ENCODE measurements at regions of chr12 and their contacts with region 1.

Region 1: DNA sequence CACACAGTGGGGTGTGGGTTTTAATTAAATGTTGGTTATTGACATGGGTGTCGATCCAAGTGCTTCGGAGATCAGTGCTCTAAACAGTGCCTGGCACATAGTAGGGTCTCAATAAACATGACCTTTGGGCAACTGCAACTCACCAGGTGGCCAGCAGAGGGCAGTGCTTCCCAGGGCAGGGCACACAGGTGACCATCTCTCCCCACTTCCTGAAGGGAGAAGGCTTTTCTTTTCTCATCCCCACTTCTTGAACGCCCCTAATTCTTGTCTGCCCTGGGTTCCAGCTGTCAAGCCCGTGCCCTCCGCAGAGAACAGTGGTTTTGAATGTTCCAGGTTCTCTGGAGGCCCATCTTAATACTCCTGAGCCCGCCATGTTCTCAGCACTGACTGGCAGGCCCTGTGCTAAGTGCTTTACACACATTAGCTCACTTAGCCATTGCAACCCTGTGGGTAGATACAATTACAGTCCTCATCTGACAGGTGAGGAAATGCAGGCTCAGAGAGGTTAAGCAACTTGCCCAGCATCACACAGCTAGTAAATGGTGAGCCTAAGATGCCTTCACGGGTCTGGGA is 16.3 kb downstream of the RAPGEF3 start:
- DNase-seq: peak; percentile 87
- H3K4me3 Mint-ChIP-seq: no peak overlapping the region
- H3K27ac Mint-ChIP-seq: no peak overlapping the region
- H3K4me1 Mint-ChIP-seq: peaks cover 19% of the 10 kb centered on the region
- H3K27me3 Mint-ChIP-seq: peaks cover 2% of the 10 kb centered on the region

Region 2: DNA sequence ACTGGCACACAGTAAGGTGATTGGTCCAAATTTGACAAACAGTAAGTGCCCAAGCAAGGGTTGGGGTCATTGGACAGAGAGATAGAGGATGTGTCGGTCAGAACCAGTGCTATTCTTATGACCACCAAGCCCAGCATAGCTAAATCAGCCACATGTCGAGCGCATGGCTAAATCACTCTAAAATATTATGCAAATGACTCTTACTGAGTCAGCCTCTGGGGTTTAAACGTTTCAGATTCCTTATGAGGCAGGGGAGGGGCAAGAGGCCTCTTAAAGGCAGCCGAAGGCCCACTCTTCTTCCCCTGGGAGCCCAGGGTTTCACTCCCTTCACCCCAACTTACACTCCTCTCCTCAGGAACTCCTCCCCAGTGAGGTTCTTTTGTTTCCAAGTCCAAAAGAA is 16.4 kb before region 1 on chr12:
- CTCF ChIA-PET with region 1: interaction called, 85 read pairs
- intact Hi-C with region 1: no loop called
- DNase-seq: no peak
- H3K4me3 Mint-ChIP-seq: no peak overlapping the region
- H3K27ac Mint-ChIP-seq: no peak overlapping the region
- H3K4me1 Mint-ChIP-seq: peaks cover 19% of the 10 kb centered on the region
- H3K27me3 Mint-ChIP-seq: no peaks in the 10 kb centered on the region

Region 3: GRCh38 chr12:47767216-47767724 is 24.9 kb after region 1 on chr12:
- CTCF ChIA-PET with region 1: interaction called, 728 read pairs
- intact Hi-C with region 1: loop called (anchors 1 kb)
- DNase-seq: peak; percentile 89
- H3K4me3 Mint-ChIP-seq: no peak overlapping the region
- H3K27ac Mint-ChIP-seq: no peak overlapping the region
- H3K4me1 Mint-ChIP-seq: no peaks in the 10 kb centered on the region
- H3K27me3 Mint-ChIP-seq: no peaks in the 10 kb centered on the region

Region 4: DNA sequence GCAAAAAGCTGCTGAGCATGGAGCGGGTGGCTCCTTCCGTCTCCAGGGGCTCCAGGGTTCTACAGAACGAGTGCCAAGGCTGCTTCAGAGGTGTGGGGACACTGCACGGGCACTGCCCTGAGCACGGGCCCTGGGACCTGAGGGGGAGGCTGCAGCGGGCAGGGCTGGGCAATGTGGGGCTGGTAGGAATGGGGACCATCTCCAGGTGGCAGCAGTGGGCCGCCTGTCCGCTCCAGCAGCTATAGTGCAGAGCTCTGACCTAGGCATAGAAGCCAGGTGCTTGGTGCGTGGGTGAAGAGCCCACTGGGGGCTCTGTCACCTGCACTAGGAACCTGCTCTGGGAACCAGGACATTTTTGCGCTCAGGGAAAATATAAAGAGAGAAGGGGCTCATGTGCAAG is 55.1 kb after region 1 on chr12:
- CTCF ChIA-PET with region 1: interaction called, 23 read pairs
- intact Hi-C with region 1: no loop called
- DNase-seq: peak; percentile 55
- H3K4me3 Mint-ChIP-seq: no peak overlapping the region
- H3K27ac Mint-ChIP-seq: peak overlapping the region; percentile 87
- H3K4me1 Mint-ChIP-seq: peaks cover 38% of the 10 kb centered on the region
- H3K27me3 Mint-ChIP-seq: no peaks in the 10 kb centered on the region

Region 5: GRCh38 chr12:47828608-47829536 is 86.5 kb after region 1 on chr12:
- CTCF ChIA-PET with region 1: interaction called, 440 read pairs
- intact Hi-C with region 1: no loop called
- DNase-seq: peak; percentile 63
- H3K4me3 Mint-ChIP-seq: peak overlapping the region; percentile 63
- H3K27ac Mint-ChIP-seq: peak overlapping the region; percentile 86
- H3K4me1 Mint-ChIP-seq: peaks cover 86% of the 10 kb centered on the region
- H3K27me3 Mint-ChIP-seq: no peaks in the 10 kb centered on the region

Region 6: DNA sequence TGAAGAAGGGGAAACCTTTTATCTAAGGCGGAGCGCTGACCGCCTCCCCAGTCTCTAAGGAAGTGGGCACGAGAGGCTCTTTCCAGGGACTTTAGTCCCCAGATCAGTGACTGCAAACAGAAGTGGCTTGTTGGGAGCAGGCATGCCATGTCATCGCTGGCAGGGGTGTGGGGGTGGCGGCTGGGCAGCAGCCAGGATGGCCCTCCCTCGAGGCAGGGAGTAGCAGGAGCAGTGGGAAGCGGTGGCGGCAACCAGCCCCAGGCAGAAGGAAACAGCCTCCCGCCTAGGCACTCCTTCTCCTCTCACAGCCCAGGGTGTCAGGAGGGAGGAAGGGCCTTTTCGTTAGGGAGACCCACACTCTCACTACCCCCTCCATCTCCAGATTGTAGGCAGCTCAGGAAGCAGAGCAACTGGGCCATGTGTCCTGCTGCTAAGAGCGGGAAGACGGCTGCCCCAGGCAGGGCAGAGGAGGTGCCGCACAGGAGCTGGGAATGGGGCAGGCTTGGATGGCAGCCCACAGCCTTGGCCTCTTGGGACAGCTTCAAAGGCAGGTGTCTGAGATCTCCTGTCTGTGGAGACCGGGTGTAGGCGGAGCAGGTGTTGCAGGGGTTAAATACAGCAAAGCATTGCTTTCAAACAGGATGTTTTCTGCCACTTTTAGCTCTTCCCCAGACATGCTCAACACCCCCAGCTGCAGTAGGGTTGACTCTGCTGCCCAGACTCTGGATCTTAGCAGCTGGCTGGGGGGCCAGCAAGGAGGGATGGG is 140.6 kb after region 1 on chr12:
- CTCF ChIA-PET with region 1: interaction called, 5 read pairs
- intact Hi-C with region 1: loop called (anchors 1 kb)
- DNase-seq: peak; percentile 73
- H3K4me3 Mint-ChIP-seq: peak overlapping the region; percentile 78
- H3K27ac Mint-ChIP-seq: peak overlapping the region; percentile 97
- H3K4me1 Mint-ChIP-seq: peaks cover 69% of the 10 kb centered on the region
- H3K27me3 Mint-ChIP-seq: no peaks in the 10 kb centered on the region

Region 7: GRCh38 chr12:48165094-48165981 is 423.0 kb after region 1 on chr12:
- CTCF ChIA-PET with region 1: interaction called, 11 read pairs
- intact Hi-C with region 1: loop called (anchors 10 kb)
- DNase-seq: peak; percentile 72
- H3K4me3 Mint-ChIP-seq: no peak overlapping the region
- H3K27ac Mint-ChIP-seq: no peak overlapping the region
- H3K4me1 Mint-ChIP-seq: peaks cover 9% of the 10 kb centered on the region
- H3K27me3 Mint-ChIP-seq: no peaks in the 10 kb centered on the region